ENCODE measurements at regions of chr9 and their contacts with region 1.

Region 1: GRCh38 chr9:4515958-4516375 is 25.7 kb downstream of the SLC1A1 start:
- DNase-seq: no peak
- H3K4me3 Mint-ChIP-seq: no peak overlapping the region
- H3K27ac Mint-ChIP-seq: no peak overlapping the region
- H3K4me1 Mint-ChIP-seq: peaks cover 16% of the 10 kb centered on the region
- H3K27me3 Mint-ChIP-seq: peaks cover 8% of the 10 kb centered on the region

Region 2: DNA sequence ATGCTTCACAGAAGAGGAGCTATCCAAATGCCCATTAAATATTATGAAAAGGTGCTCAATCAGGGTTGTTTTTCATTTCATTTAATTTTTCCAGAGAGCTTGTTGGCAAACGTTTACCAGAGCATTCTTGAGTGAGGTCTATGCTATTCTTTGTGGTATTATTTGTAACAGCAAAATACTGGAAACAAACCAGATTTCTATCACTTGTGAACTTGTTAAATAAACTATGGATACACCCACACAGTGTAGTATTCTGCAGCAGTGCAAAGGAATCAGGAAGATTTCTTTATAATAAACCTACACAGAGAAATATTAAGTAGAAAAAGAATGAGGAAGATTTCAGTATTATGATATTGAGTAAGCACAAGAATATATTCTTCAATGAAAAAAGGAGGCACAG is 40.7 kb before region 1 on chr9:
- intact Hi-C with region 1: no loop called
- DNase-seq: no peak
- H3K4me3 Mint-ChIP-seq: no peak overlapping the region
- H3K27ac Mint-ChIP-seq: no peak overlapping the region
- H3K4me1 Mint-ChIP-seq: no peaks in the 10 kb centered on the region
- H3K27me3 Mint-ChIP-seq: peaks cover 5% of the 10 kb centered on the region

Region 3: GRCh38 chr9:4530375-4530774 is 14.4 kb after region 1 on chr9:
- intact Hi-C with region 1: loop called (anchors 1 kb)
- DNase-seq: no peak
- H3K4me3 Mint-ChIP-seq: no peak overlapping the region
- H3K27ac Mint-ChIP-seq: peak overlapping the region; percentile 62
- H3K4me1 Mint-ChIP-seq: peaks cover 12% of the 10 kb centered on the region
- H3K27me3 Mint-ChIP-seq: peaks cover 4% of the 10 kb centered on the region

Region 4: GRCh38 chr9:5278486-5278885 is 762.5 kb after region 1 on chr9:
- intact Hi-C with region 1: no loop called
- DNase-seq: no peak
- H3K4me3 Mint-ChIP-seq: no peak overlapping the region
- H3K27ac Mint-ChIP-seq: no peak overlapping the region
- H3K4me1 Mint-ChIP-seq: no peaks in the 10 kb centered on the region
- H3K27me3 Mint-ChIP-seq: no peaks in the 10 kb centered on the region

Measured in activated T-helper 1 cell treated with anti-CD3 and anti-CD28 coated beads, Interleukin-12 subunit alpha, Interleukin-12 subunit beta, Interleukin-2, Interleukin-4 antibody, amounts not matched to agents 30 ng/mL and 10 ng/mL and 1 ng/mL, durations not matched to agents 14 hours and 24 hours and 36 hours (primary cell).